Activated CD4-positive, alpha-beta memory T cell treated with anti-CD3 and anti-CD28 coated beads, Interleukin-2, amount 10 ng/mL, durations not matched to agents 7 days and 5 days (primary cell): ENCODE measurements at regions of chr7 and their contacts with region 1.

Region 1: DNA sequence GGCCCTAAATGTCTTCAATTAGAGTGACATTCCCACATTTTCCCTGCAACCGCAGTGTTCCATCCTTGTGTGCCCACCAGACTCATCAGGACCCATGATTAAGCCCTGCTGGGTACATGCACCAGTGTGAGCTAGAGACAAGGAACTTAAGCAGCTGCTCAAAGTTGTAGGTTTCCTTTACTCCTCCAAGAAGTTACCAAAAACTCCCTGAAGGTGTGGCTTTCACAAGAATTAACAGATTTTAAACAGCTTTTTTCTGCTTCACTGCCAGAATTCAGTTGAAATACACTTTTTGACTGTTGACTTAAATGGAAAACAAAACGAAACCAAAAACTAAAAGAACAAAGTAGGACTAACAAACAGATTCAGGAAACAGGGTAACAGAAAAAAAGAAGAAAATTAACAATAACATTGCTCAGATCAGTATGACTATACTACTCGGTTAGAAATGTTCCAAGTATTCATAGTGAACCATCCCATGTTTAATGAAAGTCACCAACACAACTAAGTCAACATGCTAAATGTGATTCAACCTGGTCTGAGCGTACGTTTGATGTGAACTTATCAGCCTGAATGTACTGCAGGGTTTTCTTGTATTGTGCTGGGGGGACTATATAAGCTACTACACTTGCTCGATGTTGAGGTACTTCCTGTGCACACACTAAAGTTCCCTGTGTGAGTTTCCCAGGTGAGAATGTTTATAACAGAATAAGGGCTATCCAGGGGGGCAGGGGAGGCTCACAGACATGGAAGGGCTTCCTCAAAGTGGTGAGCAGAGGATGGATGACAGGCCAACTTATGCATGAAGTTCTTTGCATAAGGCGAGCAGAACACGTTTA is 22.2 kb downstream of the SLC37A3 start:
- DNase-seq: peak; percentile 33
- H3K4me3 Mint-ChIP-seq: peak overlapping the region; percentile 77
- H3K27ac Mint-ChIP-seq: peak overlapping the region; percentile 99
- H3K4me1 Mint-ChIP-seq: peaks cover 47% of the 10 kb centered on the region
- H3K27me3 Mint-ChIP-seq: no peaks in the 10 kb centered on the region

Region 2: DNA sequence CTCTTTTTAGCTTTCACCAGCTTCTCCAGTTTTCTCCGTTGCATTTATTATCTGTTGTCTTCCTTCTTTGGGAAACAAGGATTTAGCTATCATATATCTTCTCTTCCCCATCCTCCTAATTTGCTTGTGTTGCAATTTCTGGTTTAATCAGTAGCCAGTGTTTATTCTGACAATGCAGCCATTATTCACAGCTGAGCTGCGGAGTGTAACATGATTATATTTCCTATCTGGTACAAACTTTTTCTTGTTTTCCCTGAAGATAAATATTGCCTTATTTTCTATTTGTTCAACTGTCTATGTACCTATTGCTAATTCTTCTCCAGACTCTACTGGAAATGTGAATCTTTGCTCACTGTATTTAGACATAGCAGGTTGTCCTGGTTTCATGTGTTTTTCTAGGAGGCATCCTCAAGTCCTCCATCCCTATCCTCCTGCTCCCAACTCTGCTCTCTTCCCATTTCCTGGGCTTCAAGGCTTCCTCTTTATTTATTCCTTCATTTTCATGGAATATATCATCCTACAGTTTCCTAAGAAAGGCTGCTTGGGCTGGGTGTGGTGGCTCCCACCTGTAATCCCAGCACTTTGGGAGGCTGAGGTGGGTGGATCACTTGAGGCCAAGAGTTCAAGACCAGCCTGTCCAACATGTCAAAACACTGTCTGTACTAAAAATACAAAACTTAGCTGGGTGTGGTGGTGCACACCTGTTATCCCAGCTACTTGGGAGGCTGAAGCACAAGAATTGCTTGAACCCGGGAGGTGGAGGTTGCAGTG is 126.9 kb before region 1 on chr7:
- CTCF ChIA-PET with region 1: interaction called, 4 read pairs
- POLR2A ChIA-PET with region 1: interaction called, 10 read pairs
- DNase-seq: no peak
- H3K4me3 Mint-ChIP-seq: no peak overlapping the region
- H3K27ac Mint-ChIP-seq: no peak overlapping the region
- H3K4me1 Mint-ChIP-seq: peaks cover 31% of the 10 kb centered on the region
- H3K27me3 Mint-ChIP-seq: no peaks in the 10 kb centered on the region

Region 3: DNA sequence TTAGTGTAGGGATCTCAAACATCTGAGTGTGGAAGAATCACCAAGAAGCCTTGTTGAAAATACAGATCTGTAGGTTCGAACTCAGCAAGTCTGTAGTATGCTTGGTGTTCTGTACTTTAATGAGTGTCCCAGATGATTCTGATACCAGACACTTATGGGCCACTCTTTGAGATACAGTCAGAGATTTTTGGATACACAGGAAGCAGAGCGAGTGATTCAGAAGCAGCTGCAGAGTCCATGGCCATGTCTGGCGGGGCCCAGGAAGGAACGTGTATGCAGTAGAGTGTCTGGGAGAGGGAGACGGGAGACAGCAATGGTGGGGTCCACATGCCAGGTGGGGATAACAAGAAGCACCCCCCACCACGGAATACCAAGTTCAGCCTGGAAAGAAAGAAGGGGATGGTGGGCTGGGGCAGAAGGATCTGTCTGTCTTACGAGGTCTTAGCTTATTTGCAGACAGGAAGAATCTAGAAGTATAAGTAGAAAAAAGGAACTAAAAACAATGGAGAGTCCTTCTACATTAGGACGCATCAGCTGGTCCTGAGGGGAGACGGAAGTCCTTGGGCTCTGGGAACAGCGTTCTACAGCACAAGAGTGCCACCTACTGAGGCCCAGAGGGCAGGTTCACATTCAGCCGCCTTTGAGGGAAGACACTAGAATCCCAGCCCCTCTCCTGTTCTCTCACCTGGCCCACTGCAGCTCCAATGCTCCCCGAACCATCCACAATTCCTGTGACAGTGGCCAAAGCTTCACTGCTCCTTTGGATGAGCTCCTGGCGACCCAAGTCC is 33.2 kb before region 1 on chr7:
- CTCF ChIA-PET with region 1: no interaction called
- POLR2A ChIA-PET with region 1: no interaction called
- DNase-seq: no peak
- H3K4me3 Mint-ChIP-seq: no peak overlapping the region
- H3K27ac Mint-ChIP-seq: no peak overlapping the region
- H3K4me1 Mint-ChIP-seq: no peaks in the 10 kb centered on the region
- H3K27me3 Mint-ChIP-seq: no peaks in the 10 kb centered on the region

Region 4: GRCh38 chr7:140358412-140359051 is 17.6 kb before region 1 on chr7:
- CTCF ChIA-PET with region 1: interaction called, 25 read pairs
- POLR2A ChIA-PET with region 1: interaction called, 93 read pairs
- DNase-seq: peak; percentile 60
- H3K4me3 Mint-ChIP-seq: peak overlapping the region; percentile 77
- H3K27ac Mint-ChIP-seq: peak overlapping the region; percentile 96
- H3K4me1 Mint-ChIP-seq: peaks cover 35% of the 10 kb centered on the region
- H3K27me3 Mint-ChIP-seq: no peaks in the 10 kb centered on the region

Region 5: DNA sequence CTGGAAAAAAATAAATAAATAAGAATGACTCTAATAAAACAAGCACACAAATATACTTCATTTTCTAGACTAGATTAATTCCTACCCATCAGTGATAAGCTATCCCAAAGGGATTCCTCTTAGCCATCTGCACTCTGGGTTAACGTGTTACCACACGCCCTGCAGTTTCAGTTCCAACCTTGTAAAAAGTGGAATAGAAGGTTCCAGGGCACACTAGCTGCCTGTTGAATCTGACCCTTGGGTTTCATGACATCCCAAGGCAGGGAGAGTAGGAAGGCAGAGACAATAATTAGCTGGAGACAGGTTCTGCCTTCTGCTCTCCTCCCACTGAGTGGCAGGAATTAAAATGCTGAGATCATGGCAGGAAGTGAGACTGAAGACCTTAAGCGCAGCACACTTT is 11.3 kb before region 1 on chr7:
- CTCF ChIA-PET with region 1: interaction called, 25 read pairs
- POLR2A ChIA-PET with region 1: interaction called, 93 read pairs
- DNase-seq: no peak
- H3K4me3 Mint-ChIP-seq: no peak overlapping the region
- H3K27ac Mint-ChIP-seq: peak overlapping the region; percentile 24
- H3K4me1 Mint-ChIP-seq: peaks cover 11% of the 10 kb centered on the region
- H3K27me3 Mint-ChIP-seq: no peaks in the 10 kb centered on the region

Region 6: GRCh38 chr7:140390466-140391190 is 14.5 kb after region 1 on chr7:
- CTCF ChIA-PET with region 1: interaction called, 7 read pairs
- POLR2A ChIA-PET with region 1: interaction called, 24 read pairs
- DNase-seq: no peak
- H3K4me3 Mint-ChIP-seq: no peak overlapping the region
- H3K27ac Mint-ChIP-seq: no peak overlapping the region
- H3K4me1 Mint-ChIP-seq: peaks cover 14% of the 10 kb centered on the region
- H3K27me3 Mint-ChIP-seq: no peaks in the 10 kb centered on the region

Region 7: GRCh38 chr7:140397784-140398750 is 22.0 kb after region 1 on chr7 and contains the start of gene SLC37A3:
- CTCF ChIA-PET with region 1: interaction called, 3 read pairs
- POLR2A ChIA-PET with region 1: interaction called, 21 read pairs
- DNase-seq: peak; percentile 89
- H3K4me3 Mint-ChIP-seq: peak within 1 kb of the TSS; percentile 92
- H3K27ac Mint-ChIP-seq: peak within 1 kb of the TSS; percentile 76
- H3K4me1 Mint-ChIP-seq: peaks cover 37% of the 10 kb centered on the region
- H3K27me3 Mint-ChIP-seq: no peaks in the 10 kb centered on the region
- total RNA-seq, gene SLC37A3: 28.8 to 30.7 TPM

Region 8: GRCh38 chr7:140403878-140404564 is 27.9 kb after region 1 on chr7 and contains the start of gene RAB19:
- CTCF ChIA-PET with region 1: interaction called, 3 read pairs
- POLR2A ChIA-PET with region 1: interaction called, 21 read pairs
- DNase-seq: peak; percentile 53
- H3K4me3 Mint-ChIP-seq: peak within 1 kb of the TSS; percentile 85
- H3K27ac Mint-ChIP-seq: peak within 1 kb of the TSS; percentile 82
- H3K4me1 Mint-ChIP-seq: peaks cover 38% of the 10 kb centered on the region
- H3K27me3 Mint-ChIP-seq: no peaks in the 10 kb centered on the region
- total RNA-seq, gene RAB19: 4.3 to 4.8 TPM

Region 9: DNA sequence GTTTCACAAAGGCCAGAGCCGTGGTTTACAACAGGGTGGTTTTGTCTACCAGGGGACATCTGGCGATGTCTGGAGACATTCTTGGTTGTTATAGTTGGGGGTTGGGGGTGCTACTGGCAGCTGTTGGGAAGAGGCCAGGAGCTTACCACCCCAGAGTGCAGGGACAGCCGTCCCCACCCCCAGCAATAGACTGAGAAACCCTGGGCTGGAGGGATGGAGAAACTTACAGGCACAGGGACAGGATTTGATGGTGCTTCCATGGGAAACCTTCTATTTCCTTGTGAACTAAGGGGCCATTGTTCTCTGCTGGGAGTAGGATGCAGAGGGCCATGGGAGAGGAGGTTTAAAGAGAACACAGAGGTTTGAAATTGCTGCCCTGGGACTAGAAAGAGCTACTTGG is 307.5 kb after region 1 on chr7:
- CTCF ChIA-PET with region 1: no interaction called
- POLR2A ChIA-PET with region 1: no interaction called
- DNase-seq: no peak
- H3K4me3 Mint-ChIP-seq: no peak overlapping the region
- H3K27ac Mint-ChIP-seq: no peak overlapping the region
- H3K4me1 Mint-ChIP-seq: no peaks in the 10 kb centered on the region
- H3K27me3 Mint-ChIP-seq: no peaks in the 10 kb centered on the region